Activated T-helper 1 cell treated with anti-CD3 and anti-CD28 coated beads, Interleukin-12 subunit alpha, Interleukin-12 subunit beta, Interleukin-2, Interleukin-4 antibody, amounts not matched to agents 30 ng/mL and 10 ng/mL and 1 ng/mL, durations not matched to agents 14 hours and 24 hours and 36 hours (primary cell): ENCODE measurements at regions of chr10 and their contacts with region 1.

Region 1: GRCh38 chr10:28130267-28130666 is 131.4 kb upstream of the ODAD2 start:
- DNase-seq: no peak
- H3K4me3 Mint-ChIP-seq: no peak overlapping the region
- H3K27ac Mint-ChIP-seq: no peak overlapping the region
- H3K4me1 Mint-ChIP-seq: no peaks in the 10 kb centered on the region
- H3K27me3 Mint-ChIP-seq: no peaks in the 10 kb centered on the region

Region 2: GRCh38 chr10:28111712-28112111 is 18.6 kb before region 1 on chr10:
- intact Hi-C with region 1: loop called (anchors 1 kb)
- DNase-seq: no peak
- H3K4me3 Mint-ChIP-seq: no peak overlapping the region
- H3K27ac Mint-ChIP-seq: no peak overlapping the region
- H3K4me1 Mint-ChIP-seq: no peaks in the 10 kb centered on the region
- H3K27me3 Mint-ChIP-seq: no peaks in the 10 kb centered on the region